Calu3 (cell line): ENCODE measurements at regions of chr2 and their contacts with region 1.

Region 1: DNA sequence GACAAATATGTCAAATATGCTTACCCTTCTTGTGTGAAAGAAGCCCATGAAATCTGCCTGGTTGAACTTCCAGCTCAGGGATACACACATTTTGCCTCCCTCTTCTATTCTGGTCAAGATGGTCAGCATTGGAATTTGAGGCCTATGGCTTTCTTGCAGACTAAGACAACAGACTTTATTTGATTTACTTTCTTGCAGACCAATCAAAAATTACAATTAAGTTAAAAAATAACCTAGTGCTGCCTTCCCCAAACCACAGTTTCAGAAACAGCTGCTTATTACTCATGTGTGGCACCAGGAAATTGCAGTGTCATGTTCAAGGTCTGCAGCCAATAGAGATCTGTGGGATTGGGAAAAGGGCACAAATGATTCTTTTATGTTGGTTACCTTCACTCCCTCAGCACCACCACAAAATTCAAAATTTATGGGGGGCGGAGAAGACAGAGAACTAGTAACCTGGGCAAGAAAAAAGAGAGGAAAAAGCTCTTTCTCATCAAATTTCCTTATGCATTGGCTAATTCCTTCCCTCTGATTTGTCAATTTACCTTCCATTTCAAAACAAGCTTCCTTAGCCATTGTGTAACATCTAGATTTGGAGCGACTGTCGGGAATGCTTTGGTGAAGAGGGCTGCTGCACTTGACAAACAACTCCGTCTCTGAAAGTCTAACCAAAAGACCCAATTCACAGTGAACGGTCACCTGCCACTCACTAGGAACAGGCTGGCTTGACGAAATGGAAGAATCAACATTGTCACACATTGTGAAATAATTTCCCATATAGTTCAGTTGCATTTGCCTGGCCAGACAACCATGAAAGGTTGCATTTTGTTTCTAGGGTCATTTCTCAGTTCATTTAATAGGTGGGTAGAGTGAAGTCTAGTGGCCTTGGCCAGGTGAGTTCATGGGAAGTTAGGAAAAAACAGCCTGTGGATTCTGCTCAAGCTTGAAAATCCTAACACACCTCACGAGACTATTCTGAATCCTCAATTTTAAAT is 100.4 kb upstream of the FZD5 start:
- DNase-seq: peak; percentile 35
- H3K4me3 Mint-ChIP-seq: peak overlapping the region; percentile 9
- H3K27ac Mint-ChIP-seq: peak overlapping the region; percentile 83
- H3K4me1 Mint-ChIP-seq: peaks cover 42% of the 10 kb centered on the region
- H3K27me3 Mint-ChIP-seq: no peaks in the 10 kb centered on the region
- CTCF ChIP-seq: no peak

Region 2: GRCh38 chr2:207902821-207903220 is 32.7 kb after region 1 on chr2:
- CTCF ChIA-PET with region 1: no interaction called
- intact Hi-C with region 1: loop called (anchors 2 kb)
- DNase-seq: no peak
- H3K4me3 Mint-ChIP-seq: no peak overlapping the region
- H3K27ac Mint-ChIP-seq: no peak overlapping the region
- H3K4me1 Mint-ChIP-seq: peaks cover 42% of the 10 kb centered on the region
- H3K27me3 Mint-ChIP-seq: no peaks in the 10 kb centered on the region
- CTCF ChIP-seq: no peak

Region 3: GRCh38 chr2:207993151-207993763 is 123.2 kb after region 1 on chr2:
- CTCF ChIA-PET with region 1: no interaction called
- intact Hi-C with region 1: no loop called
- DNase-seq: no peak
- H3K4me3 Mint-ChIP-seq: no peak overlapping the region
- H3K27ac Mint-ChIP-seq: no peak overlapping the region
- H3K4me1 Mint-ChIP-seq: no peaks in the 10 kb centered on the region
- H3K27me3 Mint-ChIP-seq: no peaks in the 10 kb centered on the region
- CTCF ChIP-seq: no peak

Region 4: GRCh38 chr2:208040199-208041171 is 170.4 kb after region 1 on chr2:
- CTCF ChIA-PET with region 1: interaction called, 14 read pairs
- intact Hi-C with region 1: no loop called
- DNase-seq: peak; percentile 76
- H3K4me3 Mint-ChIP-seq: no peak overlapping the region
- H3K27ac Mint-ChIP-seq: no peak overlapping the region
- H3K4me1 Mint-ChIP-seq: peaks cover 9% of the 10 kb centered on the region
- H3K27me3 Mint-ChIP-seq: no peaks in the 10 kb centered on the region
- CTCF ChIP-seq: peak; percentile 76

Region 5: DNA sequence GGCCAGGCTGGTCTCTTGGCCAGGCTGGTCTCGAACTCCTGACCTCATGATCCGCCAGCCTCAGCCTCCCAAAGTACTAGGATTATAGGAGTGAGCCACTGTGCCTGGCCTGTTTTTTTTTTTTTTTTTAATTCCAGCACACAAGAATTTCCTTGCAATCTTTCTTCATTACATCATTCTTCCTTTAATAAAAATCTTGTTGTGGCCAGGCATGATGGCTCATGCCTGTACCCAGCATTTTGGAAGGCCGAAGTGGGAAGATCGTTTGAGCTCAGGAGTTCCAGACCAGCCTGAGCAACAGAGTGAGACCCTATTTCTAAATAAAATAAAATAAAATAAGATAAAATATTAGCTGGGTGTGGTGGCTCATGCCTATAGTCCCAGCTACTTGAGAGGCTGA is 176.6 kb after region 1 on chr2:
- CTCF ChIA-PET with region 1: interaction called, 10 read pairs
- intact Hi-C with region 1: no loop called
- DNase-seq: no peak
- H3K4me3 Mint-ChIP-seq: no peak overlapping the region
- H3K27ac Mint-ChIP-seq: no peak overlapping the region
- H3K4me1 Mint-ChIP-seq: peaks cover 5% of the 10 kb centered on the region
- H3K27me3 Mint-ChIP-seq: no peaks in the 10 kb centered on the region
- CTCF ChIP-seq: no peak